BJ (cell line): ENCODE measurements at regions of chr1 and their contacts with region 1.

Region 1: DNA sequence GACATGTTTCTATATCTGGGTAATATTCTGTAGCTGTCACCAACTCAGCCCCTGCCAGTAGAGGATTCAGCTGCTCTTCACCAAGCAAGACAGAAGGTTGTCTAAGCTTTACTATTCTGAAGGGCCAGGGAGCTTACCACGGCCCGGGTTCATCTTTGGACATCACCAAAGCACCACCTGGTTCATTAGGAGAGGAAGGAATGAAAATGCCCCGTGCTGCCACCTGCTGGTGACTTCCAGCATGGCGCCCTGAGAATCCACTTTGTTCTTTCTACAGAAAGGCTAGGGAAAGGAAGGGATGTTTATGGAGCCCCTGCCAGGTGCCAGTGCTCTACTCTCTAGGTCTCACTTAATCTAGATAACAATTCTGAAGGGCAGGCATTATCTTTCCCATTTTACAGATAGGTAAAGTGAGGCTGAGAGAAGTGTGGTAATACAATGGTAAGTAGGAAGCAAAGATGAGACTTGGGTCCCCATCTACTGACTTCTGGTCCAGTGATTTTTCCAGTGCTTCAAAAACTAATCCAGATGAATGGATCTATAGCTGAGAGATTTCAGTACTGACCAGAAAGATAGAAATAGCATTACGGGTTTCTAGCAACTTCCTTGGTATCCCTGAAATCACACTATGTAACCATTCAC is 79.5 kb downstream of the BEND5 start:
- DNase-seq: no peak
- H3K4me3 ChIP-seq: no peak overlapping the region
- H3K27me3 ChIP-seq: no peaks in the 10 kb centered on the region
- CTCF ChIP-seq: peak; percentile 89

Region 2: DNA sequence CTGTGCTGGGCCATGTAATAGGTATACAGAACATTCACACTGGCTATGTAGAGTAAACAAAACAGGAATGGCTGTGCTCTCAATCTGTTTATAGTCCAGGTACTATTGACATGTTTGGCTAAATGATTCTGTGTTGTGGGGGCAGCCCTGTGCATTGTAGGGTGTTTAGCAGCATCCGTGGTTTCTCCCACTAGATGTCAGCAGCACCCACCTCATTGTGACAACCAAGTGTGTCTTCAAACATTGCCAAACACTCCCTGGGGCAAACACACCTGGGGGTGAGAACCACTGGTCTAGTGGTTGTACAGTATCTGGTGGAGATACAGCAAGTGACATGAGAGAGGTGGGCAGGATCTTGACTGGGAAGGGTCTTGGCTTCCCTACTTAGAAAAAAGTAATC is 144.8 kb before region 1 on chr1:
- CTCF ChIA-PET with region 1: interaction called, 11 read pairs
- POLR2A ChIA-PET with region 1: no interaction called
- DNase-seq: no peak
- H3K4me3 ChIP-seq: no peak overlapping the region
- H3K27me3 ChIP-seq: no peaks in the 10 kb centered on the region
- CTCF ChIP-seq: 0 out of 2 replicates have a peak, but pooled peaks have one; percentile 16